ENCODE measurements at regions of chr2 and their contacts with region 1.

Region 1: DNA sequence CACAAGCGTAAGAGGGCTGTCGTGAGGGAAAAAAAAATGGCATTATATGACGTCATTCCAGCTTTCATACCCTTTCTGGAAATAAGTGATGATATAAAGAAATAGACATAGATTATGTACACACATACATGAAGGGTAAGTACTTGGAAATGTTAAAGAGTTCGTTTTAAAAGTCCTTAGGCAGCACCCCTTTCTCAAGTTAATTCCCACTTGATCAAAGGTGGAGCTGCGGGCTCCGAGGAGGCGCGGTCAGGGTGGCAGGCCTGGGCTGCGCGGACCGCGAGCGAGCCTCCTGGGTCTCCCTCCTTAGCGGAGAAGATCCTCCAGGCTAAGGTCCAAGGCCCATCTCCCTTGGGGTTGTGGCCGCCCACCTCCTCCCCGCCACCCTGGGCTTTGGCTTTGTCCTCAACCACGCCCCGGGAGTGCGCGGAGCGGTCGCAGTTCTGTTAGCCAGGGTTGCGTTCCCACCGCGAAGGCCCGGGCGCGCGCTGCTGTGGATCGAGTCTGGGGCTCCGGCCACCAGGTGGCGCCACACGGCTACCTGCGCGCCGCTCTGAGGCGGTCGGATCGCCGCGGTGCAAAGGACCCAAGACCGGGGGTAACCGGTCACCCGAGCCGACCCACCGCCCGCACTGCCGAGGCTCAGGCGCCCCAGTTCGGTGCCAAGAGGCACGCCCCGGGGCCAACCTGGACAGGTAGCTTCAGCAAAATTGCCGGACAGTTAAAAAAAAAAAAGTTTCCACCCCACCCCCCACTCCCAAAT is 66.8 kb downstream of the HNRNPLL start:
- DNase-seq: peak; percentile 67 to 79 (median 78)
- H3K4me3 ChIP-seq: peak overlapping the region; percentile 31 to 82 (median 57)
- H3K27ac ChIP-seq: no peak overlapping the region
- H3K4me1 ChIP-seq: peaks cover 0 to 8% (median 4%) of the 10 kb centered on the region in 4 experiments
- H3K27me3 ChIP-seq: peaks cover 0 to 14% (median 8%) of the 10 kb centered on the region in 5 experiments

Region 2: GRCh38 chr2:38549071-38549704 is 13.3 kb after region 1 on chr2:
- CTCF ChIA-PET with region 1: interaction called, 31 read pairs
- POLR2A ChIA-PET with region 1: interaction called, 3 read pairs
- DNase-seq: peak in 2 of 3 donors; percentile 45 to 68
- H3K4me3 ChIP-seq: peak overlapping the region in 5 of 7 experiments; percentile 27 to 78 (median 55)
- H3K27ac ChIP-seq: peak overlapping the region in 1 of 2 experiments; percentile 18
- H3K4me1 ChIP-seq: peaks cover 6 to 26% (median 15%) of the 10 kb centered on the region in 4 experiments
- H3K27me3 ChIP-seq: no peaks in the 10 kb centered on the region

Region 3: GRCh38 chr2:38740851-38741731 is 205.2 kb after region 1 on chr2:
- CTCF ChIA-PET with region 1: interaction called, 35 read pairs
- POLR2A ChIA-PET with region 1: no interaction called
- DNase-seq: peak; percentile 67 to 85 (median 82)
- H3K4me3 ChIP-seq: no peak overlapping the region
- H3K27ac ChIP-seq: no peak overlapping the region
- H3K4me1 ChIP-seq: peaks cover 0 to 4% (median 1%) of the 10 kb centered on the region in 4 experiments
- H3K27me3 ChIP-seq: no peaks in the 10 kb centered on the region

Region 4: GRCh38 chr2:38771632-38772031 is 235.7 kb after region 1 on chr2:
- CTCF ChIA-PET with region 1: no interaction called
- POLR2A ChIA-PET with region 1: no interaction called
- DNase-seq: no peak
- H3K4me3 ChIP-seq: no peak overlapping the region
- H3K27ac ChIP-seq: no peak overlapping the region
- H3K4me1 ChIP-seq: no peaks in the 10 kb centered on the region
- H3K27me3 ChIP-seq: peaks cover 0 to 10% (median 3%) of the 10 kb centered on the region in 5 experiments

Region 5: GRCh38 chr2:38815614-38816479 is 279.9 kb after region 1 on chr2:
- CTCF ChIA-PET with region 1: no interaction called
- POLR2A ChIA-PET with region 1: no interaction called
- DNase-seq: no peak
- H3K4me3 ChIP-seq: no peak overlapping the region
- H3K27ac ChIP-seq: no peak overlapping the region
- H3K4me1 ChIP-seq: no peaks in the 10 kb centered on the region
- H3K27me3 ChIP-seq: no peaks in the 10 kb centered on the region

Measured in common myeloid progenitor, CD34-positive (primary cell).